Right cardiac atrium (tissue), 5 donors: ENCODE measurements at regions of chr12 and their contacts with region 1.

Region 1: GRCh38 chr12:55862286-55862685 is 19.6 kb upstream of the MMP19 start:
- DNase-seq: no peak
- ATAC-seq: no peak
- H3K4me3 ChIP-seq: no peak overlapping the region
- H3K27ac ChIP-seq: no peak overlapping the region
- H3K4me1 ChIP-seq: no peaks in the 10 kb centered on the region
- H3K27me3 ChIP-seq: no peaks in the 10 kb centered on the region

Region 2: GRCh38 chr12:55700255-55701018 is 161.8 kb before region 1 on chr12:
- intact Hi-C with region 1: no loop called
- DNase-seq: peak in 2 of 3 donors; percentile 48 to 56
- ATAC-seq: no peak
- H3K4me3 ChIP-seq: no peak overlapping the region
- H3K27ac ChIP-seq: peak overlapping the region; percentile 62
- H3K4me1 ChIP-seq: peaks cover 6% of the 10 kb centered on the region
- H3K27me3 ChIP-seq: no peaks in the 10 kb centered on the region

Region 3: GRCh38 chr12:55901881-55902490 is 39.7 kb after region 1 on chr12:
- intact Hi-C with region 1: loop called in 1 of 4 experiments (anchors 5 kb)
- DNase-seq: no peak
- ATAC-seq: peak in 1 of 2 donors; percentile 16
- H3K4me3 ChIP-seq: no peak overlapping the region
- H3K27ac ChIP-seq: no peak overlapping the region
- H3K4me1 ChIP-seq: no peaks in the 10 kb centered on the region
- H3K27me3 ChIP-seq: no peaks in the 10 kb centered on the region

Region 4: DNA sequence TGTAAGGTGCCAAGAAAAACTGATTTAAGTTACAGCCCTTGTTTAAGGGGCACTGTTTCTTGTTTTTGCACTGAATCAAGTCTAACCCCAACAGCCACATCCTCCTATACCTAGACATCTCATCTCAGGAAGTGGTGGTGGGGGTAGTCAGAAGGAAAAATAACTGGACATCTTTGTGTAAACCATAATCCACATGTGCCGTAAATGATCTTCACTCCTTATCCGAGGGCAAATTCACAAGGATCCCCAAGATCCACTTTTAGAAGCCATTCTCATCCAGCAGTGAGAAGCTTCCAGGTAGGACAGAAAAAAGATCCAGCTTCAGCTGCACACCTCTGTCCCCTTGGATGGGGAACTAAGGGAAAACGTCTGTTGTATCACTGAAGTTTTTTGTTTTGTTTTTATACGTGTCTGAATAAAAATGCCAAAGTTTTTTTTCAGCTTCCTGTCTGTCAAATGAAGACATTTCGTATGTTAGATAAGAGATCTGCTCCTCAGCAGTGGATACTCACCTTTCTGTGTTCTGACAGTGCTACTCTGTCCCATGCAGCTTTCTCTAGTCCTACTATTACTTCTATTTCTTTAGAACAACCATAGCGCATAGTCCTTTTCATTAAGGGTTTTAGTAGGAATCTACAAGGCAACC is 240.9 kb after region 1 on chr12:
- intact Hi-C with region 1: no loop called
- DNase-seq: no peak
- ATAC-seq: no peak
- H3K4me3 ChIP-seq: peak overlapping the region; percentile 83
- H3K27ac ChIP-seq: no peak overlapping the region
- H3K4me1 ChIP-seq: no peaks in the 10 kb centered on the region
- H3K27me3 ChIP-seq: no peaks in the 10 kb centered on the region